Right lobe of liver (tissue), 6 donors: ENCODE measurements at regions of chr3 and their contacts with region 1.

Region 1: GRCh38 chr3:132641837-132642538 is 17.6 kb downstream of the ACAD11 start:
- DNase-seq: no peak
- ATAC-seq: peak; percentile 59 to 88 (median 75)
- H3K4me3 ChIP-seq: no peak overlapping the region
- H3K27ac ChIP-seq: no peak overlapping the region
- H3K4me1 ChIP-seq: peaks cover 0 to 2% (median 0%) of the 10 kb centered on the region in 4 donors
- H3K27me3 ChIP-seq: no peaks in the 10 kb centered on the region
- CTCF ChIP-seq: peak; percentile 63 to 83 (median 77)
- POLR2A ChIP-seq: no peak

Region 2: GRCh38 chr3:132535575-132536441 is 106.2 kb before region 1 on chr3:
- intact Hi-C with region 1: loop called in 1 of 2 experiments (anchors 10 kb)
- DNase-seq: peak in 2 of 3 donors; percentile 30 to 60
- ATAC-seq: peak; percentile 90 to 94 (median 92)
- H3K4me3 ChIP-seq: no peak overlapping the region
- H3K27ac ChIP-seq: no peak overlapping the region
- H3K4me1 ChIP-seq: no peaks in the 10 kb centered on the region
- H3K27me3 ChIP-seq: no peaks in the 10 kb centered on the region
- CTCF ChIP-seq: peak; percentile 58 to 68 (median 62)
- POLR2A ChIP-seq: no peak

Region 3: GRCh38 chr3:132972333-132972732 is 330.3 kb after region 1 on chr3:
- intact Hi-C with region 1: no loop called
- DNase-seq: no peak
- ATAC-seq: no peak
- H3K4me3 ChIP-seq: no peak overlapping the region
- H3K27ac ChIP-seq: no peak overlapping the region
- H3K4me1 ChIP-seq: no peaks in the 10 kb centered on the region
- H3K27me3 ChIP-seq: no peaks in the 10 kb centered on the region
- CTCF ChIP-seq: no peak
- POLR2A ChIP-seq: no peak